Lower leg skin (tissue), 4 donors: ENCODE measurements at regions of chr13 and their contacts with region 1.

Region 1: GRCh38 chr13:92761710-92762109 is 464.9 kb upstream of the GPC6 start:
- DNase-seq: no peak
- H3K4me3 ChIP-seq: no peak overlapping the region
- CTCF ChIP-seq: no peak
- POLR2A ChIP-seq: no peak

Region 2: GRCh38 chr13:91270031-91270430 is 1491.7 kb before region 1 on chr13:
- intact Hi-C with region 1: loop called (anchors 5 kb)
- DNase-seq: no peak
- H3K4me3 ChIP-seq: no peak overlapping the region
- CTCF ChIP-seq: no peak
- POLR2A ChIP-seq: no peak

Region 3: GRCh38 chr13:93172109-93172508 is 410.4 kb after region 1 on chr13:
- intact Hi-C with region 1: no loop called
- DNase-seq: no peak
- H3K4me3 ChIP-seq: no peak overlapping the region
- CTCF ChIP-seq: no peak
- POLR2A ChIP-seq: no peak